K562 (cell line): ENCODE measurements at regions of chr7 and their contacts with region 1.

Region 1: GRCh38 chr7:13279854-13280435 is 592.5 kb downstream of the ARL4A start:
- DNase-seq: peak in 1 of 4 experiments; percentile 25
- ATAC-seq: no peak
- H3K4me3 ChIP-seq: no peak overlapping the region
- H3K27ac ChIP-seq: no peak overlapping the region
- H3K4me1 ChIP-seq: no peaks in the 10 kb centered on the region
- H3K27me3 ChIP-seq: no peaks in the 10 kb centered on the region
- CTCF ChIP-seq: peak in 1 of 3 experiments; percentile 50; a peak in 2 of 6 replicates
- EP300 ChIP-seq: no peak
- POLR2A ChIP-seq: no peak
- RAD21 ChIP-seq: peak; percentile 69 to 78

Region 2: DNA sequence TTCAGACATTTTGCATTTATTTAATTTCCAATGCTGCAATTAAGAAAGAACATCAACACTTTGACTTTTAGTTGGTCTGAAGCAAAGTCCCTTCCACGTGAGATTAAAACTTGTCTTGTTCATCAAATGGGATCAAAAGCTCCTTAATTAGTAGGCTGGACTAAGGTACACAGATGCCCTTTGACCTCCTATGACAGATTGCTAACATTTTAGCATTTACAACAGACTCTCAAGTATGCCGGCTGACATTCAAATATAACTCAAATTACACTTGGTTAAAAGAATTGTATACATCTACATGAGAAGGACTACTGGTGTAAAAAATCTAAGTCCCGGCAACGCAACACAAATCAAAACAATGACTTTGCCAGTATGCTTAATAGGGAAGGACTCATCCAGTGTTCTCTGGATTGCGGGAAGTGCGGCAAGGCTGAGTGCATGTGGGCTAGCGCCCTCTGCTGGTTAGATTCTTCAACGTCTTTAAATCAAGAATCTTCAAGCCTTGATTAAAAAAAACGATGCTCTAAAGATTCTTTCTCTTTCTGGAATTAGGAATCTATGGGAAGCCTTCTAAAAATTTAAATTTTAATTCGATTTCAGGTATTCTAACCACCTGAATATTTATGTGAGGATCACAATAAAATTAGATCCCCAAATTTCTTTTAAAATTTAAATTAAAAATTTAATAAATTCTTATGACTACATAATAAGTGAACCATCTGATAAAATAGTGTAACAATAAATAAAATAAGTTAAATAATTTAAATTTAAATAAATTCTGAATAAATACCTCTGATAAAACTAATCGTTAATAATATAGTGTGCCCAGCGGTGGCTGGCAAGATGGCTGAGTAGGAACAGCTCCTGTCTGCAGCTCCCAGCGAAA is 1177.9 kb after region 1 on chr7:
- CTCF ChIA-PET with region 1: interaction called, 7 read pairs
- POLR2A ChIA-PET with region 1: no interaction called
- in situ Hi-C with region 1: loop called (anchors 10 kb)
- intact Hi-C with region 1: loop called (anchors 1 kb)
- DNase-seq: peak; percentile 40 to 75 (median 52)
- ATAC-seq: peak; percentile 74
- H3K4me3 ChIP-seq: no peak overlapping the region
- H3K27ac ChIP-seq: no peak overlapping the region
- H3K4me1 ChIP-seq: no peaks in the 10 kb centered on the region
- H3K27me3 ChIP-seq: no peaks in the 10 kb centered on the region
- CTCF ChIP-seq: peak; percentile 42 to 76 (median 66)
- EP300 ChIP-seq: no peak
- POLR2A ChIP-seq: no peak
- RAD21 ChIP-seq: peak; percentile 78 to 83

Region 3: GRCh38 chr7:14691597-14692203 is 1411.8 kb after region 1 on chr7:
- CTCF ChIA-PET with region 1: interaction called, 8 read pairs
- POLR2A ChIA-PET with region 1: no interaction called
- in situ Hi-C with region 1: loop called (anchors 5 kb)
- intact Hi-C with region 1: loop called (anchors 1 kb)
- DNase-seq: peak; percentile 7 to 57 (median 42)
- ATAC-seq: no peak
- H3K4me3 ChIP-seq: no peak overlapping the region
- H3K27ac ChIP-seq: no peak overlapping the region
- H3K4me1 ChIP-seq: no peaks in the 10 kb centered on the region
- H3K27me3 ChIP-seq: no peaks in the 10 kb centered on the region
- CTCF ChIP-seq: peak; percentile 49 to 74 (median 67)
- EP300 ChIP-seq: no peak
- POLR2A ChIP-seq: no peak
- RAD21 ChIP-seq: peak; percentile 73 to 77

Region 4: DNA sequence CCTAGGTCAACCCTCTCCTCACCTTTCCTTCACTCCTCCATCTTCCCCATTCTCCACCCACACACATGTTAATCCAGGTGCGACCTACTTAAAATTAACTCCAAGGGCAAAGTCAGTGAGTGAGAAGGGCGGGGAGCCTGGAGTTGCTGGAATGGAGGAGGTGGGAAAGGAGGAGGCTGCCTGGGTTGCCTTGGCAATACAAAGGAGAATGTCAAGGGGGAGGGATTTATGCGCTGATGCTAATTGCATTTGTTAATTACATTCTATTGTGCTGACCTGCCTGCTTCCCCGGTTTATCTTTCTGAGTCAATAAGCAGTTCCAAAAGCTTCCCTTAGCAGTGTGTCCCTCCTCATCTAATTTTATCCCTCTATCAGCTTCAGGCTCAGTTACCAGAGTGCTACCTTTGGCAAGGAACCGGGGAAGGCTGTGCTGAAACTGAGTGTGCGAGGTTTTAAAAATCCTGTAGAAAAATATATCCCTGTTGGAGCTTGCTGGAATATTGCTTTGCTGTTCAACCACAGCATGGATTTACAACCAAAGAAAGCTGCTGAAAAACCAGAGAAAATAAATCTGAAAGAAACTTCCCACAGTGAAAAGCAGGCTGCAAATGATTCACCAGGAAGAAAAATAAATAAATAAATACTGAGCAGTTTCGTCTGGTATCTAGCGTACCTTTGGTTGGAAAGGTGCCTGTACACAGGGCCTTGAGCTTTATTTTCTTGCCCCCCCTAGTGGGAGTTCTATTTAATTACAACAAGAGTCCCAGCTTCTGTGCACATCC is 1735.8 kb after region 1 on chr7:
- CTCF ChIA-PET with region 1: no interaction called
- POLR2A ChIA-PET with region 1: no interaction called
- in situ Hi-C with region 1: no loop called
- intact Hi-C with region 1: loop called (anchors 10 kb)
- DNase-seq: peak; percentile 16 to 39 (median 26)
- ATAC-seq: peak; percentile 72
- H3K4me3 ChIP-seq: no peak overlapping the region
- H3K27ac ChIP-seq: no peak overlapping the region
- H3K4me1 ChIP-seq: no peaks in the 10 kb centered on the region
- H3K27me3 ChIP-seq: no peaks in the 10 kb centered on the region
- CTCF ChIP-seq: peak; percentile 14 to 43 (median 43); a peak in 4 of 6 replicates
- EP300 ChIP-seq: no peak
- POLR2A ChIP-seq: no peak
- RAD21 ChIP-seq: peak; percentile 33 to 51; a peak in 3 of 4 replicates